ENCODE measurements at regions of chr13 and their contacts with region 1.

Region 1: GRCh38 chr13:113122550-113123225 is at the start of gene F10:
- DNase-seq: peak; percentile 95
- ATAC-seq: peak; percentile 93
- H3K4me3 ChIP-seq: peak within 1 kb of the TSS; percentile 70 to 92 (median 76)
- H3K27ac ChIP-seq: peak within 1 kb of the TSS; percentile 83
- H3K4me1 ChIP-seq: peaks cover 43% of the 10 kb centered on the region
- H3K27me3 ChIP-seq: no peaks in the 10 kb centered on the region; a peak in 1 of 5 replicates
- CTCF ChIP-seq: peak; percentile 34; the same call in 1 of the 2 replicates
- EP300 ChIP-seq: peak in 1 of 2 experiments; percentile 47; a peak in 2 of 4 replicates
- POLR2A ChIP-seq: peak in 1 of 2 experiments; percentile 92; a peak in 2 of 4 replicates
- RAD21 ChIP-seq: peak; percentile 62
- total RNA-seq, gene F10: 19.9 and 58.4 TPM in 2 replicates

Region 2: GRCh38 chr13:113029487-113030258 is 93.0 kb before region 1 on chr13:
- CTCF ChIA-PET with region 1: interaction called, 15 read pairs
- POLR2A ChIA-PET with region 1: no interaction called
- in situ Hi-C with region 1: no loop called
- intact Hi-C with region 1: no loop called
- DNase-seq: peak; percentile 25
- ATAC-seq: peak; percentile 77
- H3K4me3 ChIP-seq: no peak overlapping the region
- H3K27ac ChIP-seq: no peak overlapping the region
- H3K4me1 ChIP-seq: peaks cover 10% of the 10 kb centered on the region
- H3K27me3 ChIP-seq: no peaks in the 10 kb centered on the region
- CTCF ChIP-seq: peak; percentile 96
- EP300 ChIP-seq: no peak
- POLR2A ChIP-seq: no peak
- RAD21 ChIP-seq: peak; percentile 88

Region 3: DNA sequence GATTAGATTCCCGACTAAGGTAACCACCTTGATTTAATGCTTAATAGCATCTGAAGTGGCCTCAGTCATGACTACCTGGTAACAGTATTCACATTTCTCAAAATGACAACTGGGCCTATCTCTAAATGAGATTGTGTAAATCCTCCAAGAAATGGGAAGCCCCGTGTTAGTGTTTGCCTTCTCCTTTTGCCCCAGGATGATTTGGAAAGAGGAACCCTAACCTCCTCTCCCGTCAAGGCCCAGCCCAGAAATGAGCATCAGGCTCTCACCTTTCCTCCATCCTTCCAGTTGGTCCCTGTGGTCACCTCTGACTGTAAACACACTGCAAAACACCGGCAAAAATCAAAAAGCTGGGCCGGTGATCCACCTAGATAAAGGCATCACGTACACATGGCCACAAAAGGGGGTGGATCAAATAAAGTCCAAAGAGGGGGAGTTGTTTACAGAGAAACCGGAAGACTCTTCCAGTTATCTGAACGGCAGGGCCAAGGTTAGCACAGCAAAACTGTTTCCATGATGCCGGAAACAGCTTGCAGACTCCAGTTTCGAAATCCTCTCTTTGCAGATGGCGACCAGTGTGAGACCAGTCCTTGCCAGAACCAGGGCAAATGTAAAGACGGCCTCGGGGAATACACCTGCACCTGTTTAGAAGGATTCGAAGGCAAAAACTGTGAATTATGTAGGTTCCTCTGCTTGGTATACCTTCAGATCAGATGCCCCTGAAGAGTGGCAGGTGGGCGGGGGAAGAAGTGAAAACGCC is 16.3 kb after region 1 on chr13:
- CTCF ChIA-PET with region 1: no interaction called
- POLR2A ChIA-PET with region 1: interaction called, 32 read pairs
- in situ Hi-C with region 1: no loop called
- intact Hi-C with region 1: no loop called
- DNase-seq: peak; percentile 97
- ATAC-seq: peak; percentile 95
- H3K4me3 ChIP-seq: peak overlapping the region in 2 of 3 experiments; percentile 5 to 29; a peak in 1 of 6 replicates
- H3K27ac ChIP-seq: peak overlapping the region; percentile 72
- H3K4me1 ChIP-seq: peaks cover 49% of the 10 kb centered on the region
- H3K27me3 ChIP-seq: no peaks in the 10 kb centered on the region
- CTCF ChIP-seq: peak; percentile 18; the same call in 1 of the 2 replicates
- EP300 ChIP-seq: peak; percentile 67 to 95; a peak in 2 of 4 replicates
- POLR2A ChIP-seq: peak in 1 of 2 experiments; percentile 43; a peak in 1 of 4 replicates
- RAD21 ChIP-seq: 0 out of 2 replicates have a peak, but pooled peaks have one; percentile 23

Region 4: GRCh38 chr13:113179374-113180230 is 56.9 kb after region 1 on chr13:
- CTCF ChIA-PET with region 1: no interaction called
- POLR2A ChIA-PET with region 1: interaction called, 4 read pairs
- in situ Hi-C with region 1: no loop called
- intact Hi-C with region 1: loop called (anchors 5 kb)
- DNase-seq: no peak
- ATAC-seq: no peak
- H3K4me3 ChIP-seq: no peak overlapping the region
- H3K27ac ChIP-seq: no peak overlapping the region
- H3K4me1 ChIP-seq: peaks cover 23% of the 10 kb centered on the region
- H3K27me3 ChIP-seq: no peaks in the 10 kb centered on the region
- CTCF ChIP-seq: no peak
- EP300 ChIP-seq: no peak
- POLR2A ChIP-seq: no peak
- RAD21 ChIP-seq: no peak

Measured in HepG2 (cell line).